Activated CD4-positive, alpha-beta T cell treated with anti-CD3 and anti-CD28 coated beads, Interleukin-2, amount 10 ng/mL, durations not matched to agents 24 days and 14 days (primary cell): ENCODE measurements at regions of chr1 and their contacts with region 1.

Region 1: DNA sequence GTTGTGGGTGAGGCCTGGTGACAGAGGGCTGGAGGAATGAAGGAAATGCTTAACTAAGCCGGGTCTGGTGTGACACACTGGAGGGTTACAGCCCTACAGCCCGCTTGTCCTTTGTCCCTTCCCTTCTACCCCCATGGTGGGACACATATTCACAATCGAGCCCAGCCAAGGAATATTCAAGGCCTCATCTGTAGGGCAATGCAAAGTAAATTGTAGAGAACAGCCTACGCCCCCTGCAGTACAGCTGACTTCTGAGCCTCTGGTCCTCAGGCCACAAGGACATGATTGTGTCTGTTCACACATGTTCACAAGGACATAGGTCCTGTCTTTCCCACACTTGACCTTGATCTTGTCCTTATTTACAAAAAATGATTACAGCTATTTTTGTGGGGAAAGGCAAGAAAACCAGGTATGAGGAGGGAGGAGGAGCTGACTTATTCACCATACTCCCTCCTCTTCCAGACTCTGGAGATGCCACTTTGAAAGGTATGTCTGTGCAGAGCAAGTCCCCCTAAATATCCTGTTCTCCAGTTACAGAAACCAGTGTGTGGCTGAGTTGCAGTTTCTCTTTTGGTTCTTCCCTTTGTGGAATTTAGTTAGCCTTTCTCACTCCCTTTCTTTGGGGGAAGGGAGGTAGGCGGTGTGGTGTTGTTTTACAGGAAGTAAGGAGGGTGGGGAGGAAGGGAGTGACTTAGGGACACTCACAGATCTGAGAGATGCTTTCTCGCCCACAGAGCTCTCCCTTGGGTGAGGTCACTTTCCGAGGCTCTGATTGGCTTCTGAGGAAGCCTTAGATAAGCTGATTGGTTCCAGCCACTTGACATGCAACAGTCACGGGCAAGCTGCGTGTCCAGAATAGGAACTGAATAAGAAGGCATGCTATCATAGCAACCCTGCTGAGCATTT is 14.6 kb downstream of the POLR3GL start:
- DNase-seq: peak; percentile 96
- H3K4me3 Mint-ChIP-seq: no peak overlapping the region
- H3K27ac Mint-ChIP-seq: no peak overlapping the region
- H3K4me1 Mint-ChIP-seq: peaks cover 12% of the 10 kb centered on the region
- H3K27me3 Mint-ChIP-seq: no peaks in the 10 kb centered on the region

Region 2: GRCh38 chr1:145927063-145927886 is 51.8 kb before region 1 on chr1 and contains the start of gene RBM8A:
- intact Hi-C with region 1: loop called (anchors 5 kb)
- DNase-seq: peak; percentile 98
- H3K4me3 Mint-ChIP-seq: no peak within 1 kb of the TSS
- H3K27ac Mint-ChIP-seq: peak within 1 kb of the TSS; percentile 86
- H3K4me1 Mint-ChIP-seq: peaks cover 15% of the 10 kb centered on the region
- H3K27me3 Mint-ChIP-seq: no peaks in the 10 kb centered on the region
- total RNA-seq, gene RBM8A: 326 and 355 TPM in 2 replicates

Region 3: GRCh38 chr1:145949219-145949618 is 29.9 kb before region 1 on chr1:
- intact Hi-C with region 1: no loop called
- DNase-seq: no peak
- H3K4me3 Mint-ChIP-seq: no peak overlapping the region
- H3K27ac Mint-ChIP-seq: no peak overlapping the region
- H3K4me1 Mint-ChIP-seq: peaks cover 21% of the 10 kb centered on the region
- H3K27me3 Mint-ChIP-seq: no peaks in the 10 kb centered on the region

Region 4: GRCh38 chr1:145963995-145964901 is 14.9 kb before region 1 on chr1 and contains the starts of genes ANKRD34A and POLR3GL:
- intact Hi-C with region 1: loop called (anchors 1 kb)
- DNase-seq: peak; percentile 98
- H3K4me3 Mint-ChIP-seq: peak within 1 kb of the TSS; percentile 98
- H3K27ac Mint-ChIP-seq: peak within 1 kb of the TSS; percentile 93
- H3K4me1 Mint-ChIP-seq: peaks cover 37% of the 10 kb centered on the region
- H3K27me3 Mint-ChIP-seq: no peaks in the 10 kb centered on the region
- total RNA-seq, gene ANKRD34A: 4.8 and 5.2 TPM in 2 replicates
- total RNA-seq, gene POLR3GL: 12.1 and 12.6 TPM in 2 replicates

Region 5: GRCh38 chr1:146007506-146008133 is 28.5 kb after region 1 on chr1:
- intact Hi-C with region 1: loop called (anchors 1 kb)
- DNase-seq: no peak
- H3K4me3 Mint-ChIP-seq: peak overlapping the region; percentile 71
- H3K27ac Mint-ChIP-seq: peak overlapping the region; percentile 89
- H3K4me1 Mint-ChIP-seq: peaks cover 33% of the 10 kb centered on the region
- H3K27me3 Mint-ChIP-seq: no peaks in the 10 kb centered on the region

Region 6: GRCh38 chr1:146036965-146037646 is 58.0 kb after region 1 on chr1:
- intact Hi-C with region 1: loop called (anchors 1 kb)
- DNase-seq: peak; percentile 93
- H3K4me3 Mint-ChIP-seq: peak overlapping the region; percentile 96
- H3K27ac Mint-ChIP-seq: peak overlapping the region; percentile 97
- H3K4me1 Mint-ChIP-seq: peaks cover 46% of the 10 kb centered on the region
- H3K27me3 Mint-ChIP-seq: peaks cover 16% of the 10 kb centered on the region